PC-3 (cell line): ENCODE measurements at regions of chr10 and their contacts with region 1.

Region 1: GRCh38 chr10:15824498-15824897 is 35.8 kb downstream of the MINDY3 start:
- DNase-seq: peak; percentile 34
- ATAC-seq: no peak
- H3K4me3 ChIP-seq: no peak overlapping the region
- H3K27ac ChIP-seq: no peak overlapping the region
- H3K4me1 ChIP-seq: no peaks in the 10 kb centered on the region
- H3K27me3 ChIP-seq: no peaks in the 10 kb centered on the region
- CTCF ChIP-seq: peak; percentile 52

Region 2: GRCh38 chr10:15427843-15428414 is 396.6 kb before region 1 on chr10:
- CTCF ChIA-PET with region 1: no interaction called
- POLR2A ChIA-PET with region 1: no interaction called
- intact Hi-C with region 1: loop called (anchors 2 kb)
- DNase-seq: peak; percentile 53
- ATAC-seq: peak; percentile 64
- H3K4me3 ChIP-seq: no peak overlapping the region
- H3K27ac ChIP-seq: no peak overlapping the region
- H3K4me1 ChIP-seq: no peaks in the 10 kb centered on the region
- H3K27me3 ChIP-seq: no peaks in the 10 kb centered on the region
- CTCF ChIP-seq: peak; percentile 62

Region 3: DNA sequence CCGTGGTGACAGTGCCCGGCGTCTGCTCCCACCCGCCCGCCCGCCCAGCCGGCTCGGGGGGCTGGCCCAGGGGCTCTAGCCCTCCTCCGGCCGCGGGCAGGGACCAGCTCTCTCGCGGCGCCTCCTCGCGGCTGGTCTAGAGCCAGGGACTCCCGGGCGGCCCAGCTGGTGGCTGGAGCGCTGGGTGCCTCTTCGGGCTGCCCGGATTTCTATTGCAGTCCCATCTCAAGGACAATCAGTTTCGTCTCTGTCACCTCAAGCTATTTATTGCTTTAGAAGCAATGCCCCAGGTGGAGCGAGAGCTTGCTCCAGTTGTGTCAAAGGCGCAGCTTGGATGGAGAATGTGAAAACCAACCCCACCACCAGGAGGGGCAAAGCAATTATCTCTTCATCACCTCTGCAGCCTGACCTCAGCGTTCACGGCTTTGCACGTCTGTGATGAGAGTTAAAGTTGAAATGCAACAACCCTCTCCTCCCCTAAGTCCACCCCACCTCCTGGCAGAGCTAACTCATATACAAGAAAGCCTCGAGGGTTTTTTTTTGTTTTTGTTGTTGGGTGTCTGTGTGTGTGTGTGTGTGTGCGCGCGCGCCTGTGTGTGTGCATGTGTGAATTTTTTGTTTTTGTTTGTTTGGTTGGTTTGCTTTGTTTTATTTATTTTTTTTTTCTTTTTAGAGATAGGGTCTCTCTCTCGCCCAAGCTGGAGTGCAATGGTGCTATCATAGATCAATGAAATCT is 104.4 kb before region 1 on chr10 and contains the start of gene ITGA8:
- CTCF ChIA-PET with region 1: no interaction called
- POLR2A ChIA-PET with region 1: no interaction called
- intact Hi-C with region 1: loop called (anchors 5 kb)
- DNase-seq: no peak
- ATAC-seq: no peak
- H3K4me3 ChIP-seq: no peak within 1 kb of the TSS
- H3K27ac ChIP-seq: no peak within 1 kb of the TSS
- H3K4me1 ChIP-seq: no peaks in the 10 kb centered on the region
- H3K27me3 ChIP-seq: peaks cover 24% of the 10 kb centered on the region
- CTCF ChIP-seq: peak; percentile 43; the same call in 1 of the 2 replicates
- total RNA-seq, gene ITGA8: not detected in 2 replicates

Region 4: DNA sequence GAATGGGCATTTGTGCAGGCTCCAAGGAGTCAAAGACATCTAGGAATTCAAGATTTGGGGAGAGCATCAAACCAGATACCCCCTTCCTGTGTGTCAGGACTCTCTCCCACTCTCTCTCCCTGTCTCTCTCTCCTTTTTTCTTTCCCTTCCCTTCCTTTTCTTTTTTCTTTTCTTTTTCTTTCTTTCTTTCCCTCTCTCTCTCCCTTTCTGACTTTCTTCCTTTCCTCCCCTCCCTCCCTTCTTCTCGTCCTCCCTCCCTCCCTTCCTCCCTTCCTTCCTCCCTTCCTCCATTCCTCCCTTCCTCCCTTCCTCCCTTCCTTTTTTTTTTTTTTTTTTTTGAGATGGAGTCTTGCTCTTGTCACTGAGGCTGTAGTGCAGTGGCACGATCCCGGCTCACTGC is 59.9 kb after region 1 on chr10:
- CTCF ChIA-PET with region 1: no interaction called
- POLR2A ChIA-PET with region 1: no interaction called
- intact Hi-C with region 1: no loop called
- DNase-seq: no peak
- ATAC-seq: no peak
- H3K4me3 ChIP-seq: no peak overlapping the region
- H3K27ac ChIP-seq: no peak overlapping the region
- H3K4me1 ChIP-seq: no peaks in the 10 kb centered on the region
- H3K27me3 ChIP-seq: no peaks in the 10 kb centered on the region
- CTCF ChIP-seq: no peak

Region 5: DNA sequence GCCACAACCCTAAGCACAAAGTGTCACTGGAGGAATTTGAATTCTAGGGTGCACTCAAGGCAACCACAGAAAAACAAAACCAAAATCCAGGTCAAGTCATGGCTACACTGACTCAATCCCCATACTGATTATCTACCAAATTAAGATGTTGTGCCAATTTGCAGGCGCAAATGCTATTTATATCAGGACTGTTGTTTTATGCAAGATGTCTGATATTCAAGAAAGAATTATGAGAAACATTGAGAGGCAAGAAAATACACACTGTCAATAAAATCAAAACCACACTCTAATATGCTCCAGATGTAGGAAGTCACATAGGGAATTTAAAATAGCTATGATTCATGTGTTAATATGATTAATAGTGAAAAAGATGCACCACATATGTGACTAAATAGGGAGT is 177.1 kb after region 1 on chr10:
- CTCF ChIA-PET with region 1: no interaction called
- POLR2A ChIA-PET with region 1: no interaction called
- intact Hi-C with region 1: no loop called
- DNase-seq: no peak
- ATAC-seq: no peak
- H3K4me3 ChIP-seq: no peak overlapping the region
- H3K27ac ChIP-seq: no peak overlapping the region
- H3K4me1 ChIP-seq: no peaks in the 10 kb centered on the region
- H3K27me3 ChIP-seq: no peaks in the 10 kb centered on the region
- CTCF ChIP-seq: no peak